Endothelial cell of umbilical vein (primary cell): ENCODE measurements at regions of chr19 and their contacts with region 1.

Region 1: GRCh38 chr19:48123907-48124651 is 13.5 kb upstream of the PLA2G4C start:
- DNase-seq: peak; percentile 96
- H3K4me3 ChIP-seq: no peak overlapping the region
- H3K27ac ChIP-seq: peak overlapping the region; percentile 96
- H3K4me1 ChIP-seq: peaks cover 51% of the 10 kb centered on the region
- H3K27me3 ChIP-seq: no peaks in the 10 kb centered on the region
- CTCF ChIP-seq: peak; percentile 39 to 41
- POLR2A ChIP-seq: peak; percentile 58

Region 2: DNA sequence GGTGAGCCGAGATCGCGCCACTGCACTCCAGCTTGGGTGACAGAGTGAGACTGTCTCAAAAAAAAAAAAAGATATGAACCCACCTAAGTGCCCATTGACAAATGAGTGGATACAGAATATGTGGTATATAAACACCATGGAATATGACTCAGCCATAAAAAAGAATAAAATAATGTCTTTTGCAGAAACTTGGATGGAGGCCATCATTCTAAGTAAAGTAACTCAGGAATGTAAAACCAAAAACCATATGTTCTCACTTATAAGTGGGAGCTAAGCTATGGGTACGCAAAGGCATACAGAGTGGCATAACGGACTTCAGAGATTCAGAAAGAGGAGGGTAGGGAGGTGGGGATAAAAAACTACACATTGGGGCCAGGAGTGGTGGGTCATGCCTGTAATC is 43.0 kb before region 1 on chr19:
- CTCF ChIA-PET with region 1: no interaction called
- POLR2A ChIA-PET with region 1: no interaction called
- dilution Hi-C with region 1: no loop called
- intact Hi-C with region 1: no loop called
- DNase-seq: no peak
- H3K4me3 ChIP-seq: no peak overlapping the region
- H3K27ac ChIP-seq: no peak overlapping the region
- H3K4me1 ChIP-seq: peaks cover 5% of the 10 kb centered on the region
- H3K27me3 ChIP-seq: no peaks in the 10 kb centered on the region
- CTCF ChIP-seq: no peak
- POLR2A ChIP-seq: no peak

Region 3: GRCh38 chr19:48110350-48110966 is 13.6 kb before region 1 on chr19 and contains the start of gene PLA2G4C:
- CTCF ChIA-PET with region 1: interaction called, 112 read pairs
- POLR2A ChIA-PET with region 1: interaction called, 17 read pairs
- dilution Hi-C with region 1: no loop called
- intact Hi-C with region 1: loop called (anchors 1 kb)
- DNase-seq: peak; percentile 94
- H3K4me3 ChIP-seq: peak within 1 kb of the TSS in 2 of 3 experiments; percentile 25 to 71
- H3K27ac ChIP-seq: peak within 1 kb of the TSS; percentile 96
- H3K4me1 ChIP-seq: peaks cover 32% of the 10 kb centered on the region
- H3K27me3 ChIP-seq: no peaks in the 10 kb centered on the region
- CTCF ChIP-seq: no peak
- POLR2A ChIP-seq: peak; percentile 60
- total RNA-seq, gene PLA2G4C: 32.6 and 63.4 TPM in 2 replicates

Region 4: DNA sequence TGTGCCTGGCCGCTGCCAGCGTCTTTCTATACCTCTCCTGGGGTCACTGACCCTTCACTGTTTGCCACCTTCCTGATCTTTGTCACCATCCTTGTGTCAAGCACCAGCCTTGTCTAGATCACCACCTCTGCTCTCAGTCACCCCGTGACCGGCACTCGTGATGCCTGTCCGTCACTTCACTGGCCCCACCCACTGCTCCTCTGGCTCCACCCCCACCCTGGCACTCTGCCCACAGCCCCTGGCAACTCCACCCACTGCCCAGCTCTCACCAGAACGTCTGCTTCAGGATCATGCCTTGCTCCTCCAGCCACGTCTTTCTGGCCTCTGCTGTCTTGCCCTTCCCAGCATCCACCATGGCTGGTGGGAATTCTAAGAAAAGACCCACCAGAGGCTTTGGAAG is 11.3 kb after region 1 on chr19:
- CTCF ChIA-PET with region 1: interaction called, 18 read pairs
- POLR2A ChIA-PET with region 1: no interaction called
- dilution Hi-C with region 1: no loop called
- intact Hi-C with region 1: no loop called
- DNase-seq: peak; percentile 17
- H3K4me3 ChIP-seq: no peak overlapping the region
- H3K27ac ChIP-seq: no peak overlapping the region
- H3K4me1 ChIP-seq: no peaks in the 10 kb centered on the region
- H3K27me3 ChIP-seq: no peaks in the 10 kb centered on the region
- CTCF ChIP-seq: no peak
- POLR2A ChIP-seq: no peak

Region 5: GRCh38 chr19:48152551-48152950 is 28.5 kb after region 1 on chr19:
- CTCF ChIA-PET with region 1: interaction called, 76 read pairs
- POLR2A ChIA-PET with region 1: interaction called, 11 read pairs
- dilution Hi-C with region 1: no loop called
- intact Hi-C with region 1: loop called (anchors 1 kb)
- DNase-seq: peak; percentile 98
- H3K4me3 ChIP-seq: no peak overlapping the region
- H3K27ac ChIP-seq: peak overlapping the region; percentile 94
- H3K4me1 ChIP-seq: peaks cover 15% of the 10 kb centered on the region
- H3K27me3 ChIP-seq: no peaks in the 10 kb centered on the region
- CTCF ChIP-seq: peak; percentile 65 to 67
- POLR2A ChIP-seq: peak; percentile 32

Region 6: DNA sequence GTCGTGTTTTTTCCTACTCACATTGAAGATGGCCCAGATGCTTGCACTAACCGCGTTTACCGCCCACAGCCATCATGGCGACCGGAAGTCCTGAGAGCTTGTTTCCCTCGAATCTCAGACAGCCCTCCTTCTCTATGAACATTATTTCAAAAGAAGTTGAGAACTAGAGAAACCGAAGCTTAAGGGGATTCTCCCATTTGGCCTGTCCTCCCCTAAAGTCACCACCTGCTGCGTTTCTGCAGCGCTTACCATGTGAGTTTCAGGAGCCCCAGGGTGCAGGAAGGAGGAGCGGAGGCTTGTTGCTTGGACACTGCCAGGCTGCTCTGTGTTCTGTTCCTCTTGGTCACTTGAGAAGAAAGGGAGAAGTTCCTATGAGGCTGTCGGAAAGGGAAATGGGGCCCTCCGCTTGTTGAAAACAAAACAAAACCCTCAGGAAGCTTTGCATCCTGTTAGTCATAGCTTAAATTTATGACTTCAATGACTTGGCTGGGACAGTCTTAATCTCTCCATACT is 125.5 kb after region 1 on chr19:
- CTCF ChIA-PET with region 1: no interaction called
- POLR2A ChIA-PET with region 1: no interaction called
- dilution Hi-C with region 1: no loop called
- intact Hi-C with region 1: loop called (anchors 2 kb)
- DNase-seq: peak; percentile 97
- H3K4me3 ChIP-seq: peak overlapping the region; percentile 10 to 60 (median 51)
- H3K27ac ChIP-seq: peak overlapping the region; percentile 80
- H3K4me1 ChIP-seq: peaks cover 63% of the 10 kb centered on the region
- H3K27me3 ChIP-seq: no peaks in the 10 kb centered on the region
- CTCF ChIP-seq: no peak
- POLR2A ChIP-seq: peak; percentile 96